ENCODE measurements at regions of chr11 and their contacts with region 1.

Region 1: DNA sequence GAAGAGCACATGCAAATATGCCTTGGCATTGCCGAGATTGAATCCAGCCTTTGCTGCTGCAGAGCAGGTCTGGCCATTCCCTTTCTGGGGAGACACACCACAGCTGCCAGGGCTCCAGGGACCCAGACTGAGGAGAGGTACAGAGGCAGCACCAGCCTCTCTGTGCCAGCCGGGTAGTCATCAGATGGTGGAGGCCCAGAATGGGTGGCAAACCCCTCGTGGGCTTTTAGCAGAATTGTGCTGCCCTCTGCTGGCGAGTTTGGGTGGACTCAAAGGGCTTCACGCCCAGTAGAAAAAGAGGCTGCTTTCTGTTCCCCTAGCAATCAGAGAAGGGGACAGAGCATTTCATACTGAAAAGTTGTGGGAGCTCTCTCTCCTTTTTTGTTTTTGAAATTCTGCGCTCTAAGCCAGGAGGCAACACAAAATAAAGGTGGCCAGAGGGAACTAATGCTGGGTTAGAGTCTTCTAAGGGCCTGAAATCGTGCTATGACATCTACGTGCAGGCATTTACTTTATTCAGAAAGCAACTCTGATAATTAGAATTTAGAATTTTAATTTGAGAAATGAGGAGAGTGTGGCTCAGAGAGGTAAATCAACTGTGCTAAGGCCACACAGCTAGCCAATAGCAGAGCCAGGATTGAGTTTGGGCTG is 158.8 kb upstream of the NAV2 start:
- DNase-seq: peak; percentile 80
- H3K4me3 ChIP-seq: peak overlapping the region in 1 of 2 experiments; percentile 17; a peak in 1 of 4 replicates
- H3K27ac ChIP-seq: no peak overlapping the region
- H3K4me1 ChIP-seq: peaks cover 0 to 14% of the 10 kb centered on the region in 2 experiments; a peak in 2 of 4 replicates
- H3K27me3 ChIP-seq: peaks cover 6% of the 10 kb centered on the region; the same call in 1 of the 2 replicates
- CTCF ChIP-seq: peak; percentile 86
- EP300 ChIP-seq: no peak
- RAD21 ChIP-seq: peak; percentile 99

Region 2: GRCh38 chr11:19071255-19071654 is 482.6 kb before region 1 on chr11:
- CTCF ChIA-PET with region 1: interaction called, 328 read pairs
- POLR2A ChIA-PET with region 1: no interaction called
- DNase-seq: peak; percentile 81
- H3K4me3 ChIP-seq: peak overlapping the region; percentile 27 to 30; a peak in 3 of 4 replicates
- H3K27ac ChIP-seq: no peak overlapping the region
- H3K4me1 ChIP-seq: peaks cover 0 to 2% of the 10 kb centered on the region in 2 experiments; a peak in 1 of 4 replicates
- H3K27me3 ChIP-seq: no peaks in the 10 kb centered on the region
- CTCF ChIP-seq: peak; percentile 99
- EP300 ChIP-seq: no peak
- RAD21 ChIP-seq: peak; percentile 93

Region 3: GRCh38 chr11:19259487-19260345 is 294.1 kb before region 1 on chr11:
- CTCF ChIA-PET with region 1: interaction called, 152 read pairs
- POLR2A ChIA-PET with region 1: no interaction called
- DNase-seq: peak; percentile 73
- H3K4me3 ChIP-seq: peak overlapping the region in 1 of 2 experiments; percentile 24; a peak in 1 of 4 replicates
- H3K27ac ChIP-seq: no peak overlapping the region
- H3K4me1 ChIP-seq: no peaks in the 10 kb centered on the region
- H3K27me3 ChIP-seq: peaks cover 7% of the 10 kb centered on the region; the same call in 1 of the 2 replicates
- CTCF ChIP-seq: peak; percentile 97
- EP300 ChIP-seq: no peak
- RAD21 ChIP-seq: peak; percentile 77

Region 4: GRCh38 chr11:19311308-19312030 is 242.3 kb before region 1 on chr11:
- CTCF ChIA-PET with region 1: interaction called, 35 read pairs
- POLR2A ChIA-PET with region 1: no interaction called
- DNase-seq: peak; percentile 66
- H3K4me3 ChIP-seq: peak overlapping the region in 1 of 2 experiments; percentile 23; a peak in 1 of 4 replicates
- H3K27ac ChIP-seq: no peak overlapping the region
- H3K4me1 ChIP-seq: peaks cover 0 to 12% of the 10 kb centered on the region in 2 experiments; a peak in 1 of 4 replicates
- H3K27me3 ChIP-seq: peaks cover 25% of the 10 kb centered on the region; the same call in 1 of the 2 replicates
- CTCF ChIP-seq: peak; percentile 85
- EP300 ChIP-seq: no peak
- RAD21 ChIP-seq: peak; percentile 70

Region 5: GRCh38 chr11:19508159-19508558 is 45.6 kb before region 1 on chr11:
- CTCF ChIA-PET with region 1: no interaction called
- POLR2A ChIA-PET with region 1: no interaction called
- DNase-seq: no peak
- H3K4me3 ChIP-seq: no peak overlapping the region
- H3K27ac ChIP-seq: no peak overlapping the region
- H3K4me1 ChIP-seq: peaks cover 0 to 2% of the 10 kb centered on the region in 2 experiments; a peak in 1 of 4 replicates
- H3K27me3 ChIP-seq: peaks cover 56% of the 10 kb centered on the region; the same call in 1 of the 2 replicates
- CTCF ChIP-seq: no peak
- EP300 ChIP-seq: no peak
- RAD21 ChIP-seq: no peak

Region 6: DNA sequence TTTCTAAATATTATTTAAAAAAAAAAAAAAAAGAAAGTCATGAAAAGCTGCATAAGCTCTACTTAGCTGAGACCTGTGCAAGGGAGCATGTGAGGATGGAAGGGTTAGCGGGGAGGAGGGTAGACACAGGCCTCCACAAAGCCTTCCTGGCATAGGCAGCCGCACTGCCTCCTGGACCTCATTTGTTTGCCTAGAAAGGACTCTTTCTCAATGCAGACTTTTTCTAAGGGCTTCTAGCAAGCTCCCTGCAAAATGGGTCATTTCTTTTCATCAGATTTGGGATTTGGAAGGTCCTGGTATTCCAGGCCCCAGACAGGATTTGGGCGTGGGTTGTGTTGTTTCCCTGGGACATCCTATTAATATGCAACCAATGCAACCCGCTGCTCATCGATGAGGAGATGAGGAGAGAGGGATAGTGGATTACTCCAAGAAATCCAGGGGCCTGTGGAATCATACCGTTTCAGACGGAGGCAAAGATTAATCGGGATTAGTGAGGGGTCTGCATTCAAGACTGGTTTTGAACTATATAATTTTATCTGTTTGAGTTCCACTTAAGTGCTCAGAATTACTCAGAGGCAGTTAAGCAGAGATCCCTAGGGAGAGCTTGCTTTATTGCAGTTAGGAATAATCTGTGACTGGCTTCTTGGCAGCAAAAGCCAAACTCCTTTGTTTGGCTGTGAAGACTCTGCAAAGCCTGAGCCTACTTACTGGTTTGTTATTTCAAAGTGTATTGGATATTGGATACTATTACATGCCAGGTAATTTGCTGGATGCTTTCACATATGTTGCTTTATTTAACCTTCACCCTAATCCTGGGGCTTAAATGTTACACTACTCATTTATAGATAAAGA is 51.9 kb after region 1 on chr11:
- CTCF ChIA-PET with region 1: no interaction called
- POLR2A ChIA-PET with region 1: no interaction called
- DNase-seq: no peak
- H3K4me3 ChIP-seq: no peak overlapping the region
- H3K27ac ChIP-seq: no peak overlapping the region
- H3K4me1 ChIP-seq: peaks cover 0 to 20% of the 10 kb centered on the region in 2 experiments; a peak in 1 of 4 replicates
- H3K27me3 ChIP-seq: no peaks in the 10 kb centered on the region
- CTCF ChIP-seq: no peak
- EP300 ChIP-seq: no peak
- RAD21 ChIP-seq: no peak

Region 7: DNA sequence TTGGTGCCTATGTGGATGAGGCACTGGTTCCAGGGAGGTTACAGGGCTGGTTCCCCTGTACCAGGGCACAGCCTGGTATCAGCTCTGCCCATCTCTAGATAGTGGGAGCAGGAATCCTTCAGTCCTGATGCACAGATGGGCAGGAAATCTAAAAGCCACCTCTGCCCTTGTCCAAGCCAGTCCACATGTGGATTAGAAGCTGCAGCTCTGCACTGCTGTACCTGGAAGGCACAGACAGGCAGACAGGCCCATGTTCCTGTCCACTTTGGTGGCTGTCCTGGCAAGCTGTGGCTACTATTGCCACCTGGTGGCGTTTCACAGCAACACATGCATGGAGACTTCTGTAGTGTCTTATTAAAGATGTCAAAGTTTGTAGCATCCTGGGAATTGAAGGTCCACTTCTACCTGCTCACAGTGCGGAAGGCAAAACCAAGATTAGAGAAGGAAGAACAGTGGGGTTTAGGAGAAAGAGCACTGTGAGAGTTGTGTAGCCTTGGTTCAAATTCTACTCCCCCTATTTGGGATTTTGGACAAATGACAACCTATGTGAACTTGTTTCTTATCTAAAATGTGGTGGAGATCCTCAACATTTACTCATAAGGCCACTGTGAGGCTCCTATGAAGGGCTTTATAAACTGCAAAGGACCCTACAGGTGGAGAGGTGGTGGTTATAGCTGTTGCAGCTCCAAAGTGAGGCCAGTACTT is 188.9 kb after region 1 on chr11:
- CTCF ChIA-PET with region 1: interaction called, 85 read pairs
- POLR2A ChIA-PET with region 1: interaction called, 6 read pairs
- DNase-seq: peak; percentile 68
- H3K4me3 ChIP-seq: no peak overlapping the region; a peak in 1 of 4 replicates
- H3K27ac ChIP-seq: peak overlapping the region in 1 of 2 experiments; percentile 93; a peak in 2 of 4 replicates
- H3K4me1 ChIP-seq: peaks cover 6 to 55% of the 10 kb centered on the region in 2 experiments; a peak in 2 of 4 replicates
- H3K27me3 ChIP-seq: no peaks in the 10 kb centered on the region
- CTCF ChIP-seq: peak; percentile 86
- EP300 ChIP-seq: peak in 1 of 2 experiments; percentile 90; a peak in 2 of 4 replicates
- RAD21 ChIP-seq: peak; percentile 93

Region 8: DNA sequence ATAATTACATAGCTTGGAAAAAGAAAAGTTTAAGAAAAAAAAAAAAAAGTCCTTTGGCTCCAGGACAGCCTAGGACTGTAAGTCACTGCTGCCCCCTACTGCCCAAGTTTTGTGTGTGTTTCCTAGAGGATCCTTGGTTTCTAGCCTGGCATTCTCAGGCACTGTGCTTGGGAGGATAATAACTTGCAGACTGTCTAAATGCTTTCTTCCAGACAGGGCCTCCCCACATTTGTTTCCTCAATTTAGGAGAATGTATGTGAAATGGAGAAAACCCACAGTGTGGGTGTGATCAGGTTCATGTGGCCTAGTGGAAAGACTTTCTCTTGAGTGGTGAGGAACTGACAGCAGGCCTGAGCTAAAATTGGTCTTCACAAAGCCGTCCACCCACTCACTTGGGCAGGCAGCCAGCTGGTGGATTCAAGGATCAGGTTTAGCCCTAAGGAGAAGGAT is 349.8 kb after region 1 on chr11:
- CTCF ChIA-PET with region 1: interaction called, 131 read pairs
- POLR2A ChIA-PET with region 1: no interaction called
- DNase-seq: peak; percentile 59
- H3K4me3 ChIP-seq: no peak overlapping the region; a peak in 1 of 4 replicates
- H3K27ac ChIP-seq: peak overlapping the region; percentile 50 to 57
- H3K4me1 ChIP-seq: peaks cover 0 to 10% of the 10 kb centered on the region in 2 experiments; a peak in 2 of 4 replicates
- H3K27me3 ChIP-seq: no peaks in the 10 kb centered on the region
- CTCF ChIP-seq: peak; percentile 88
- EP300 ChIP-seq: 0 out of 4 replicates have a peak, but pooled peaks of 1 of the 2 experiments have one; percentile 14
- RAD21 ChIP-seq: peak; percentile 90

Measured in SK-N-SH (cell line).